Naive thymus-derived CD8-positive, alpha-beta T cell (primary cell): ENCODE measurements at regions of chr7 and their contacts with region 1.

Region 1: DNA sequence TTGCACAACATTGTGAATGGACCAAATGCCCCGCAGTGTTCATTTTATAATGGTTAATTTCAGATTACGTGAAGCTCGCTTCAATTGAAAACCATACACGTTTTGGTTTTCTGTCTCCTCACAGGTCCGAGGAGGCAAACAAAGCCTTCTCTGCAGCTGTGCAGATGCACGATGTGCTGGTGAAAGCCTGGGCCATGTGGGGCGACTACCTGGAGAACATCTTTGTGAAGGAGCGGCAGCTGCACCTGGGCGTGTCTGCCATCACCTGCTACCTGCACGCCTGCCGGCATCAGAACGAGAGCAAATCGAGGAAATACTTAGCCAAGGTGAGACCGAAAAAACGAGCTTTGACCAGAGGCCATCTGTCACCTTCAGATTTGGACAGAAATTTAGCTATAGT is 110.3 kb downstream of the TRRAP start:
- DNase-seq: no peak
- ATAC-seq: no peak
- H3K4me3 Mint-ChIP-seq: peak overlapping the region in 9 of 10 donors; percentile 39 to 84 (median 66)
- H3K27ac Mint-ChIP-seq: peak overlapping the region; percentile 82 to 96 (median 92)
- H3K4me1 Mint-ChIP-seq: peaks cover 18 to 49% (median 29%) of the 10 kb centered on the region in 4 donors
- H3K27me3 Mint-ChIP-seq: no peaks in the 10 kb centered on the region

Region 2: DNA sequence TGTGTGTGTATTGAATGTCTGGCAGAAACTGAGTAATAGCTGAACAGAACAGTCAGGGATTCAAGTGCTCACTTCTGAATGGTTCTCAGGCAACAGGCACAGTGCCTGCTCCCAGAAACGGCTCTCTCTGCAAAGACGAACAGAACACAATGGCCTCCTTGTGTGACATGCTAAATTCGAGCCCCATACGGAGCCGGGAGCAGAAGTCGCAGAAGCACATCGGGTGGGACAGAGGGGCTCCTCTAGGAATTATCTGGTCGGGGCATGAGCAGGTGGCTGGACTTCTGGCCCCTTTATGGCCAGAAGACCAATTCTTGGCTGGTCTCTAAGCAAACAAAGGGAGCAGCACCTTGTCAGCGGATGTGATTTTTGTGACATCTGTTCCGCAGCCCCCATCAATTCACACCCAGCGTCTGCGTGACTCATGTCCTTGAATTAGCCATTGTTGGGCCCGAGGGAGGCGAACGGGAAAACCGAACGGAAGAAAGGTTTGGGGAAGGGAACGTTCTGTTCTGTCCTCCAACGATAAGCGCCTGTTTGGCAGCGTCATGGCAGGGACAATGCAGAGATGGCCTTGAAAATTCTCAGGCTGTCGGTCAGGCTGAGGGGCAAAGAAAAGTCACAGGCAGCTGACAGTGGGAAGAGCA is 418.8 kb before region 1 on chr7:
- POLR2A ChIA-PET with region 1: no interaction called
- DNase-seq: no peak
- ATAC-seq: no peak
- H3K4me3 Mint-ChIP-seq: no peak overlapping the region
- H3K27ac Mint-ChIP-seq: no peak overlapping the region
- H3K4me1 Mint-ChIP-seq: no peaks in the 10 kb centered on the region
- H3K27me3 Mint-ChIP-seq: peaks cover 3 to 21% (median 10%) of the 10 kb centered on the region in 5 donors

Region 3: DNA sequence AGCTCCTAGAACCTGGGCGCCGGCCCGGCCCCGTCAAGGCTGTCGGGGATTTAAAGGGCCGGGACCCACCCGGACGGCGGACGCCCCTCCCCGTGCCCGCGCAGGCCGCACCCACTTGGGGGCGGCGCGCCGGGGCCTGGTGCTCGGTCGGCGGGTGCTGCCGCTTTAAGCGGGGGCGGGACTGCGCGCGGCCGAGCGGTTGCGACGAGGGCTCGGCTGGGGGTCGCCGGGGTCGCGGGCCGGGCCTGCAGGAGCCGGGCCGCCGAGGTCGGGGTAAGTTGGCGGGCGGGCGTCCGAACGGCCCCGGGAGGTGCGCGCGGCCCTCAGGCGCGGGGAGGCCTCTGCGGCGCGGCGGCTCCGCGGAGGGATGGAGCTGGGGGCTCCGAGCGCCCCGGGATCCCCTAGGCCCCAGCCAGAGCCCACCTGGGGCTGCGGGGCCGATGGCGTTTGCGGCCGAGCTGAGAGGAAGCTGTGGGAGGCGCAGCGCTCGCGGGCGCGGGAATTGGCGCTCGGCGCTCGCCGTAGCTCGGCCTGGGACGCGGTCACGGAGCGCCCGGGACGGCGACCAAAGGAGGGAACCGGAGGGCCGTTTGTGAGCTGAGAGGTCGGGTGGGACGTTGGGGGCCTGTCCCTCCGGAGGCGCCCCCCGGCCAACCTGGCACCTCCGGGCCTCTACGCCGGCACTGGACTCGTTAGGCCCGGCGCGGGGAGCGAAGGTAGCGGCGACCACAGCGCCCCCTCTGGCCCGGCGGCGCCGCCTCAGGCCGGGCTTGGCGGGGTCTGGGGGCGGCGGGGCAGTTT is 110.1 kb before region 1 on chr7 and contains the start of gene TRRAP:
- POLR2A ChIA-PET with region 1: interaction called, 12 read pairs
- DNase-seq: peak; percentile 57 to 85 (median 76)
- ATAC-seq: peak; percentile 68 to 76
- H3K4me3 Mint-ChIP-seq: peak within 1 kb of the TSS; percentile 85 to 99 (median 94)
- H3K27ac Mint-ChIP-seq: peak within 1 kb of the TSS; percentile 88 to 97 (median 96)
- H3K4me1 Mint-ChIP-seq: peaks cover 0 to 28% (median 15%) of the 10 kb centered on the region in 4 donors
- H3K27me3 Mint-ChIP-seq: peaks cover 0 to 4% (median 0%) of the 10 kb centered on the region in 5 donors
- polyA plus RNA-seq, gene TRRAP: 2.6 to 5.9 (median 4.0) TPM